GM10248 (cell line): ENCODE measurements at regions of chr1 and their contacts with region 1.

Region 1: DNA sequence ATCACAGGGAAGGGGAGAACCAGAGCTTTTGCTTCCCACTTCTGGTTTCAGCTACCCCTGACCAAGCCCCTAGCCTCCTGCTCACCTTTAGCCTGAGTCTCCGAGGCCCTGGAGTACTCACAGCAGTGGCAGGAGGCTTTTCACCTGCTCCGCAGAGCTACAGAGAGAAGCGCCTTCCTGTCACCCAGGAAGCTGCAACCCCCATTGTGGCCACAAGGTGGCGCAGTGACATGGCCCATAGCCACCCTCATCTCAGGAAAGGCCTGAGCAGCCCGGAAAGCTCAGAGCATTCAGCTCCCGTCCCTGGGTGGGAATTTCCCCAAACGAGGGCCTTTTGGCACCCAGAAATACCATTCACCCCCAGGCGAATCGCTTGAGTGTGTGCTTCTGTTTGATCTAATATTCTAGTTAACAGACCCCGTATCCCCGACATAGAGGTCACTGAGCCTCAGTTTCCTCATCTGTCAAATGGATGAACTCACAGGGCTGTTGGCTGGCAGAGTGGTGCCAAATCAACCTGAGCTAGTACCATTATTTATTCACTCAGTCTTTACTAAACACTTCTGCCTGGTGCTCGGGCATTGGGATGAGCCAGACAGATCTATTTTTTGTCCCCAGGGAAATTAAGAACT is 25.3 kb downstream of the A3GALT2 start:
- DNase-seq: peak; percentile 90
- CTCF ChIP-seq: peak; percentile 90

Region 2: DNA sequence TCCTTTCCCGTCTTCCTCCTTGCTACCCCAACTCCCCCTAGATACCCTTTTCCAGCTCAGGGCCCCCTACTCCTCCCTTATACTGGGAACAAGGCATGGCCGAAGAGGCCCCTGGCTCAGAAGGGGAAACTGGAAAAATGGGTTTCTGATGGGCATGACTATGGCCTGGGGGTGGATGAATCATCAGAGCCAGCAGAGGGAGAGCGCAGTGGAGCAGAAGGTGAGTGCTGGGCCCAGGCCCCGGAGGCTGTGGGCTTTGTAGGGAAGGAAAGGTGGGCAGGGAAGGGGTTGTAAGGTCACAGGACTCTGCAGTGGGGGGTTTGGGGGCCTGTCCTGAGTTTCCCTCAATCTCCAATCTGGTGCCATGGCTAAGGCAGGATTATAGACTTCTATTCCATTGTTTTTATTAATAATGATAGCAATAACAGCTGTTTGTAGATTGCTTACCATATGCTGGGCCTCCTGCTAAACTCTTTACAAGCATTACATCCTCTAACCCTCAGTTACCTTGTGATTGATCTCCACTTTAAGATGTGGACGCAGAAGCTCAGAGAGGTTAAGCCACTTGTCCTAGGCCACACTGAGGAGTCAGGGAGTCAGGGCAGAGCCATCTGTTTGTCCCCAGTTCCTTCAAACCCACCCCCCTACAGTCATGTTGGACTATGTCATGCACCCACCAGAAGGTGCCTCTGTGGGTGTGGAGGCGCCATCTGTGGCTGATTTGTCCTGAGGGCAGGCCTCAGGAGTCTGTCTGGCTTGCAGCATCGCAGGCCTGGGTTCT is 75.5 kb before region 1 on chr1:
- CTCF ChIA-PET with region 1: no interaction called
- POLR2A ChIA-PET with region 1: no interaction called
- DNase-seq: no peak
- CTCF ChIP-seq: no peak

Region 3: GRCh38 chr1:33273406-33273805 is 22.2 kb before region 1 on chr1:
- CTCF ChIA-PET with region 1: interaction called, 15 read pairs
- POLR2A ChIA-PET with region 1: no interaction called
- DNase-seq: no peak
- CTCF ChIP-seq: no peak

Region 4: DNA sequence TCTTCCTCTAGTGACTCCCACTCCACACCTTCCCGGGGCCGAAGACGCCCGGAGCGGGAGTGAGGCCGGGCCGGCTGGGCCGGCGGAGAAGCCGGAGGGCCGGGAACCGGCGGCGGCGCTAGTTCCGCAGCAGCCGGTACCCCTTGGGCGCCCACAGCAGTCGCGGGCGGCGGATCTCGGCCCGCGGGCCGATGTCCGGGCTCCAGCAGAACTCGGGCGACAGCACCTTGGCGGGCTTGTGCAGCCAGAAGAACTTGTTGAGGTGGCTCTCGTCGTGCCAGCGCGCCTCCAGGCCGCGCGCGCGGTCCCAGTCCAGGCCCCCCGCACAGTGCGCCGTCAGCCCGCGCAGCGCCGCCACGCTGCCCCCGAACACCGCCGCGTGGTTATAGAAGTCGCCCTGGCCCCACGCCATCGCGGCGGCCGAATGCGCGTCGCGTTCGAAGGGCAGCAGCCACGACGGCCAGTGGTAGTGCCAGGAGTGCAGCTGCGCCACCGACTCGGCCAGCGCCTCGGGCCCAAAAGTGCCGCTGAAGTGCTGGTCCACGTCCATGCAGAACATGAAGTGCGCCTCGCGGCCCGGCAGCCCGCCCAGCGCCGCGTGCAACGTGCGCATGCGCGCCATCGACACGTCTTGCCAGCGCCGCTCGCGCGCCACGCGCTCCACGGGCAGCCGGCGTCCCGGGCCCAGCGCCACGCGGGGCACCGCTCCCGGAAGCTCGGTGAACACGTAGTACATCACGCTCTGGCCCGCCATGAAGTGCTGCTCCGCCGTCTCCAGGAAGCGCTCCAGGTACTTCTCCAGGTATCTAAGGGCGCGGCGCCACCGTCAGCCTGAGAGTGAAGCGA is 11.3 kb after region 1 on chr1:
- CTCF ChIA-PET with region 1: interaction called, 88 read pairs
- POLR2A ChIA-PET with region 1: no interaction called
- DNase-seq: no peak
- CTCF ChIP-seq: no peak

Region 5: GRCh38 chr1:33342041-33342723 is 46.6 kb after region 1 on chr1:
- CTCF ChIA-PET with region 1: interaction called, 28 read pairs
- POLR2A ChIA-PET with region 1: no interaction called
- DNase-seq: no peak
- CTCF ChIP-seq: no peak

Region 6: DNA sequence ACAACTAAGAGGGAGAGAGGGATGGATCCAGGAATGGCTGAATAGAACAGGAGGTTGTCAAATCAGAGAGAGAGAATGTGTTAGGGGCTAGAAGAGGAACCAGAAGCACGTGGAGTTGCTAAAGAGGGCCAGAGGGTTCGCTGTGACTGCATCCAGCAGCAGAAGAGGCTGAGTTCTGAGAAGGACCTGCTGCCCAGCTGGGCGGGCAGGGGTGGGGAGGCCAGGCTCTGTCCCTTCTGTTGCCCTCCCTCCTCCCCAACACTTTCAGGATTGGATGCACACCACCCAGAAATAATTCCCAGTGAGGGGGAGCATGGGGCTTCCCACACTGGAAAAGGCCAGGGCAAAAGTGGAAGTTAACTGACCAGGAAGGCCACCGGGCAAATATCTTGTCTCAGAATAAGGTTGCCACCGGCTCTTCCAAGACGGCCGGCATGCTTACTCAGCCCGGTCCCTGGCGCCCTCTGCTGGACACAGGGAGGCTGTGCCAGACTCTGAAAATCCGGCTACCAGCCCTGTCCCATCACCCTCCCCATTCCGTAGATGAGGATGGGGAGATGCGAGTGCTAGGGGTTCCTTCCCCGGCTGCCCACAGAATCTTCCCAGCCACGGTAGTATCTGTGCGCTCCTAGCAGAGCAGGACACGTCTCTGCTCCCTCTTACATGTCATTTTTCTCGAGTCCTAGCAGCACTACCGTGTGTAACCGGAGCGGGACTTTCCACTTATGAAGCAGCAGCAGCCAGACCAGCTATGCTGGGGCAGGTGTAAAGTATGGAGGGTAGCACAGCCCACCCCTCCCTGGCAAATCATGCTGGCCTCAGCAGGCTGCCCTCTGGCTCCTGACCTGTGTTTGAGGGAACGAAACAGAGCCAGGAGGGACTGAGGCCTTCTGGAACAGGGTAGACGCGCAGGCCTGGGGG is 72.2 kb after region 1 on chr1:
- CTCF ChIA-PET with region 1: interaction called, 51 read pairs
- POLR2A ChIA-PET with region 1: no interaction called
- DNase-seq: peak; percentile 91
- CTCF ChIP-seq: peak; percentile 94

Region 7: DNA sequence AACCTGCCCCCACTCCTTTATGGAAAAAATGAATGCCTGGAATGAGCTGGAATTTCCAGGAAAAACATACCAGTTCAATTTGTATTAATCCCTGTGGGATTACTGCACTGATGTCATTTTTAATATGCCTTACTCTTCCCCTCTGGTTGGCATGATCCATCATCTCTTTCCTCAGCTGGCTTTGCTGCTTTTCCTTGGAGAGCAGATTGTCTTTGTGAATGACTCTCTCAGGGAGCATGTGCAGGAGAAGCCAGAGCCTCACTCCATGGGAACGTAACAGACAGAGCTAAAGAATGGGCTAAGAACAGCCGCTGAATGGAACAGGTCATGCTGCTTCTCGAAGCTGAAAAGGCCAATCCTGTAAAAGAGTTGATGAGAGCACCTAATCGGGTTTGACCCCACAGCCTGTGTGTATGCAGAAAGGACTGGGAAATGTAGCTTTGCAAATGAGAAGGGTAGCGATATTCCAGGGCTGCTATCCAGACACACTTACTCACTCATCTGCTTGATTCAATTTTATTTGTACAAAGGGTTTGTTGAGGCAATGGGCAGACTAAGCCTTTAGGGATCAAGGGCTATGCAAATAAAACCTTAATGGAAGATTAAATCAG is 114.6 kb after region 1 on chr1:
- CTCF ChIA-PET with region 1: no interaction called
- POLR2A ChIA-PET with region 1: no interaction called
- DNase-seq: no peak
- CTCF ChIP-seq: no peak